Activated T-helper 2 cell treated with anti-CD3 and anti-CD28 coated beads, Interferon-gamma antibody, Interleukin-2, Interleukin-4, amounts not matched to agents 10 μg/mL and 5 μg/mL and 100 μg/mL, durations not matched to agents 14 hours and 24 hours and 36 hours (primary cell): ENCODE measurements at regions of chr2 and their contacts with region 1.

Region 1: DNA sequence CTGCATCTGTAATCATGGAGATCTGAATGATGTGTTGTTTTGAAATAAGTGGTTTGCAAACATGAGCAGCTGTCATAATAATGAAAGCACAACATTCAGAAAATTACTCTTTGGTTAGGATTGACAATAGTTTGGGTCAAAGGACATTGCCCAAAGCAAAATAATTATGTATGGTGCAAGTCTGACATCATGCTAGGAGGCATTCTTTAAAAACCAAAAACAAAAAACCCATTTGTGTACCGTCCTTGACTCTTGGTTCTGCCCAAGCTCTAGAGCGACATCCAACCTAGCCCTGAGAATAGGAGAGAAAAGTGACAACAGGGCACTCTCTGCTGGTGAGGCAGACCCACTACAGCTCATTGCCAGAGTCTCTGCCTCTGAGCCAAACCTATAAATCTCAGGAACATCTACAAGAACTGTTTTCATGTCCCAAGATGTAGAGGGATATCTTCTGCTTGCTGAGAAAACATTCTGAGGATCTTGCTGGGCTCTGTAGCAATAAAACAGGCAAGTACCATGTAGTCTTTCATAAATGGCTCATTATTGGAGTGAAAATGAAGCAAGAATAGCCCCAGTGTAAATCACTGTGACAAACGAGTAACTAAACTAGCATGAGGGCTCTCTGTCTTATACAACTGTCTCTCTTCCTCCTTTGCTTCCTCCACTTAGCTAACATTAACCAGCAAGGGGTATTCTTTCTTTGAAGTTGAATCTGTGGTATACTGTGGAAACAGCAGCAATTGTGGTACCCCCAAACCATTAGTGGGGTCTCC is 266.8 kb upstream of the CXCR4 start:
- DNase-seq: peak; percentile 48
- H3K4me3 Mint-ChIP-seq: no peak overlapping the region
- H3K27ac Mint-ChIP-seq: peak overlapping the region; percentile 97
- H3K4me1 Mint-ChIP-seq: peaks cover 47% of the 10 kb centered on the region
- H3K27me3 Mint-ChIP-seq: no peaks in the 10 kb centered on the region

Region 2: GRCh38 chr2:135820003-135820618 is 564.6 kb before region 1 on chr2:
- intact Hi-C with region 1: loop called (anchors 2 kb)
- DNase-seq: peak; percentile 80
- H3K4me3 Mint-ChIP-seq: peak overlapping the region; percentile 71
- H3K27ac Mint-ChIP-seq: peak overlapping the region; percentile 87
- H3K4me1 Mint-ChIP-seq: peaks cover 39% of the 10 kb centered on the region
- H3K27me3 Mint-ChIP-seq: no peaks in the 10 kb centered on the region

Region 3: DNA sequence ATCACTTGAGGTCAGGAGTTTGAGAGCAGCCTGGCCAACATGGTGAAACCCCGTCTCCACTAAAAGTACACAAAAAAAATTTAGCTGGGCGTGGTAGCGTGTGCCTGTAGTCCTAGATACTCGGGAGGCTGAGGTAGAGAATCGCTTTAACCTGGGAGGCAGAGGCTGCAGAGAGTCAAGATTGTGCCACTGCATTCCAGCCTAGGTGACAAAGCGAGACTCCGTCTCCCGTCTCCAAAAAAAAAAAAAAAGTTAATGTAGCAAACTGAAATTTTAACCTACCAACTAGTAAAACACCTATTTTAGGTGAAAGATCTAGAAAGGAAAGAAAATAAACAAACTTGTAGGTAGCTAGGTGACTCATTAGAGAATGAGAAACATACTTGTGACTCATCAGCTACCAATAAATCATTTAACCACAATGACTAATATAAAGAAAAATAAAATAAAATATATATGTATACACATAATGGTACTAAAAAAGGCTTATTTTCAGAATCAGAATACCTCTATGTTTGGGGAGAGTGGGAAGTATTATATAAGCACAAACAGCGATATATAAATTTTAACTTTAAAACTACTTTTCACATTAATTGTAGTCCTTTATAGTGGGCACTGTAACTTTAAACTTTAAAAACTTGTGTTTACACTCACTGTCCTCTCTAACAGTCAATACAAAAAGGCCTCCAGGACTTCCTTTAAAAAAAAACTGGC is 435.9 kb before region 1 on chr2:
- intact Hi-C with region 1: loop called (anchors 1 kb)
- DNase-seq: no peak
- H3K4me3 Mint-ChIP-seq: no peak overlapping the region
- H3K27ac Mint-ChIP-seq: peak overlapping the region; percentile 89
- H3K4me1 Mint-ChIP-seq: peaks cover 63% of the 10 kb centered on the region
- H3K27me3 Mint-ChIP-seq: no peaks in the 10 kb centered on the region

Region 4: DNA sequence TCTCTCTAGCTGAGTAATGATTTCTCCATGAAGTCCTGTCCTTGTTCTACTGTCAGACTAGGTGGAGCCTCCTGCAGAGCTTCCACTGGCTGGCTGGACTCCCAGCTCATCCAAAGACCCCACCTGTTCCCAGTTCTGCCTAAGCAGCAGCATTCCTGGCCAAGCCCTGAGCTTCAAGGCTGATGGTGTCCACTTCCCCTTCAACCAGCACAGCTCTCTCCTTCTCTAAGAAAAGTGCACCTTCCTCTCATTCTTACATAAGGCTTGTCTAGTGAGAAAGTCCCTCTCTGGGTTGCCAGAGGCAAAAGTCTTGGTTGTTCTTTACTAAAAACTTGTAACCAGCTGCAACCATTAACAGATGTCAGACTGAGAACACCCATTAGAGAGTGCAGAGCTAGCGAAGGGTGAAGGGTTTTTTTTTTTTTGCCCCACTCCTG is 325.7 kb before region 1 on chr2:
- intact Hi-C with region 1: loop called (anchors 1 kb)
- DNase-seq: no peak
- H3K4me3 Mint-ChIP-seq: no peak overlapping the region
- H3K27ac Mint-ChIP-seq: peak overlapping the region; percentile 5
- H3K4me1 Mint-ChIP-seq: peaks cover 56% of the 10 kb centered on the region
- H3K27me3 Mint-ChIP-seq: no peaks in the 10 kb centered on the region

Region 5: DNA sequence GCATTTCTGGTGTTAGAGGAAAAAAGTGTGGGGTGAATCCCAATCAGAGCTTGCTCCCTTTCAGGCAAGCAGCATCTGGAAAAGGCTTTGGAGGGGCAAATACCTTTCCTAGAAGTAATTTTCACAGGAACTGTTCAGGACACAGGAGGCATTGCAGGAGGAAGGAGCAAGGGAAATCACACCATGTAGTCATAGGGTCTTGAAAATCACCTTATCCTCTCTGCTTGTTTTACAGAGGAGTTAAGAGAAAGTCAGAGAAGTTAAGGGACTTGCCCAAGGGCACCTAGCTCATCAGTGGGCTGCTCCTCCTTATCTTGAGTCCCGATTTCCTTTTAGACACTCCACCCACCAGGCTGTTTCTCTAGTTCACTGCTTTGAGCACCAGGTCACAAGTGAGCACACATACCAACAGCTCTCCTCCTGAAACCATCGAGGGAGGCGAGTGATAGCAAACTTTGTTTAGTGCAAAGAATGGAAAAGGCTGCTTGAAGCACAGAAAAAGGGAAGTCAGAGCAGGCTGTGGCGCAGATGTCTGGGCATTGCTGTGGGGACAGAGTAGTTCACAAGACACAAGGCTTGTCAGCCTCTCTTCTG is 177.6 kb before region 1 on chr2:
- intact Hi-C with region 1: loop called (anchors 2 kb)
- DNase-seq: no peak
- H3K4me3 Mint-ChIP-seq: peak overlapping the region; percentile 28
- H3K27ac Mint-ChIP-seq: peak overlapping the region; percentile 85
- H3K4me1 Mint-ChIP-seq: peaks cover 38% of the 10 kb centered on the region
- H3K27me3 Mint-ChIP-seq: no peaks in the 10 kb centered on the region

Region 6: GRCh38 chr2:136362676-136363390 is 21.9 kb before region 1 on chr2:
- intact Hi-C with region 1: loop called (anchors 2 kb)
- DNase-seq: no peak
- H3K4me3 Mint-ChIP-seq: peak overlapping the region; percentile 2
- H3K27ac Mint-ChIP-seq: peak overlapping the region; percentile 35
- H3K4me1 Mint-ChIP-seq: peaks cover 49% of the 10 kb centered on the region
- H3K27me3 Mint-ChIP-seq: peaks cover 1% of the 10 kb centered on the region